SK-N-SH (cell line): ENCODE measurements at regions of chr6 and their contacts with region 1.

Region 1: GRCh38 chr6:33248925-33249731 is 22.5 kb downstream of the VPS52 start:
- DNase-seq: peak; percentile 88
- H3K4me3 ChIP-seq: peak overlapping the region; percentile 62 to 76
- H3K27ac ChIP-seq: peak overlapping the region; percentile 96
- H3K4me1 ChIP-seq: peaks cover 21 to 30% of the 10 kb centered on the region in 2 experiments
- H3K27me3 ChIP-seq: no peaks in the 10 kb centered on the region
- CTCF ChIP-seq: no peak
- EP300 ChIP-seq: no peak
- RAD21 ChIP-seq: no peak

Region 2: DNA sequence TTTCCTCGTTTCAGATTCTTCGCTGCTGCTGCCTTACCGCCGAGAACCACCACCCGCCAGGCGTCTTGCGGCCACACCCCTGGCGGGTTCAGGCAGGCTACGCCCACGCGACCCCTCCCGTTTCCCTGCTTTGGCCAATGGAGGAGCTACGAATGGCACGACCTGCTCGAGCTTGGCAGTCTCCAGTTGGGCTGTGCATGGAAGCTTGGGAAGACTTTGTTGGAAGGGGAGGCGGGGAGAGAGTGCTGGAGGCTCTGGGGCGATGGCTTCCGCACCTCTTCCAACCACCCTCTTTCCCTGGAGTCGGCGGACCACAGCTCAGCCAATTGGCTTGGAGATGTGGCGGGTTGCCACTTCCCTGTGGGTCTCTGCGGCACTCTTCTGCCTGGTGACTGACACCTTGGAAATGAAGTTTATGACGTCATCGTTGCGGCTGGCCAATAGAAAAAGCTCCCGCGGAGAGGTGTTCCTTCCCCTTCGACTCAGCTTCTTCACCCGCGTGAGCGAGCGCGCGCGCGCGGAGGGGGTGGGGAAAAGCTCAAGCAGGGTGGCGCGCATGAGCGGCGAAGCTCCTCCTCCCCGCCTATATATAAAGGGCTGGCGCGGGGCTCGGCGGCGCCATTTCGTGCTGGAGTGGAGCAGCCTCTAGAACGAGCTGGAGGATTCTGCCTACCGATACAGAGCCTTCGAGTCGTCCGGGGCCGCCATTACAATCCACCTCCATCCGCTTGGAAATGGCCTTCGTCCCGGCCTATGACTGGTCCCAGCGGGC is 277.4 kb before region 1 on chr6:
- CTCF ChIA-PET with region 1: interaction called, 3 read pairs
- POLR2A ChIA-PET with region 1: interaction called, 16 read pairs
- DNase-seq: peak; percentile 92
- H3K4me3 ChIP-seq: peak overlapping the region; percentile 83 to 88
- H3K27ac ChIP-seq: peak overlapping the region; percentile 97 to 99
- H3K4me1 ChIP-seq: peaks cover 21 to 28% of the 10 kb centered on the region in 2 experiments; a peak in 3 of 4 replicates
- H3K27me3 ChIP-seq: no peaks in the 10 kb centered on the region
- CTCF ChIP-seq: no peak
- EP300 ChIP-seq: peak; percentile 7 to 55; a peak in 2 of 4 replicates
- RAD21 ChIP-seq: no peak

Region 3: GRCh38 chr6:33088931-33089620 is 160.1 kb before region 1 on chr6:
- CTCF ChIA-PET with region 1: no interaction called
- POLR2A ChIA-PET with region 1: no interaction called
- DNase-seq: no peak
- H3K4me3 ChIP-seq: no peak overlapping the region
- H3K27ac ChIP-seq: no peak overlapping the region
- H3K4me1 ChIP-seq: no peaks in the 10 kb centered on the region
- H3K27me3 ChIP-seq: peaks cover 65% of the 10 kb centered on the region
- CTCF ChIP-seq: no peak
- EP300 ChIP-seq: no peak
- RAD21 ChIP-seq: no peak

Region 4: GRCh38 chr6:33126101-33126714 is 122.9 kb before region 1 on chr6:
- CTCF ChIA-PET with region 1: interaction called, 45 read pairs
- POLR2A ChIA-PET with region 1: interaction called, 3 read pairs
- DNase-seq: peak; percentile 51
- H3K4me3 ChIP-seq: no peak overlapping the region; a peak in 1 of 4 replicates
- H3K27ac ChIP-seq: no peak overlapping the region
- H3K4me1 ChIP-seq: no peaks in the 10 kb centered on the region
- H3K27me3 ChIP-seq: peaks cover 39% of the 10 kb centered on the region; the same call in 1 of the 2 replicates
- CTCF ChIP-seq: peak; percentile 56
- EP300 ChIP-seq: no peak
- RAD21 ChIP-seq: no peak

Region 5: GRCh38 chr6:33156561-33156960 is 92.6 kb before region 1 on chr6:
- CTCF ChIA-PET with region 1: interaction called, 96 read pairs
- POLR2A ChIA-PET with region 1: no interaction called
- DNase-seq: no peak
- H3K4me3 ChIP-seq: no peak overlapping the region
- H3K27ac ChIP-seq: no peak overlapping the region
- H3K4me1 ChIP-seq: peaks cover 0 to under 1% of the 10 kb centered on the region in 2 experiments; a peak in 1 of 4 replicates
- H3K27me3 ChIP-seq: no peaks in the 10 kb centered on the region; the same call in 1 of the 2 replicates
- CTCF ChIP-seq: no peak
- EP300 ChIP-seq: no peak
- RAD21 ChIP-seq: no peak

Region 6: DNA sequence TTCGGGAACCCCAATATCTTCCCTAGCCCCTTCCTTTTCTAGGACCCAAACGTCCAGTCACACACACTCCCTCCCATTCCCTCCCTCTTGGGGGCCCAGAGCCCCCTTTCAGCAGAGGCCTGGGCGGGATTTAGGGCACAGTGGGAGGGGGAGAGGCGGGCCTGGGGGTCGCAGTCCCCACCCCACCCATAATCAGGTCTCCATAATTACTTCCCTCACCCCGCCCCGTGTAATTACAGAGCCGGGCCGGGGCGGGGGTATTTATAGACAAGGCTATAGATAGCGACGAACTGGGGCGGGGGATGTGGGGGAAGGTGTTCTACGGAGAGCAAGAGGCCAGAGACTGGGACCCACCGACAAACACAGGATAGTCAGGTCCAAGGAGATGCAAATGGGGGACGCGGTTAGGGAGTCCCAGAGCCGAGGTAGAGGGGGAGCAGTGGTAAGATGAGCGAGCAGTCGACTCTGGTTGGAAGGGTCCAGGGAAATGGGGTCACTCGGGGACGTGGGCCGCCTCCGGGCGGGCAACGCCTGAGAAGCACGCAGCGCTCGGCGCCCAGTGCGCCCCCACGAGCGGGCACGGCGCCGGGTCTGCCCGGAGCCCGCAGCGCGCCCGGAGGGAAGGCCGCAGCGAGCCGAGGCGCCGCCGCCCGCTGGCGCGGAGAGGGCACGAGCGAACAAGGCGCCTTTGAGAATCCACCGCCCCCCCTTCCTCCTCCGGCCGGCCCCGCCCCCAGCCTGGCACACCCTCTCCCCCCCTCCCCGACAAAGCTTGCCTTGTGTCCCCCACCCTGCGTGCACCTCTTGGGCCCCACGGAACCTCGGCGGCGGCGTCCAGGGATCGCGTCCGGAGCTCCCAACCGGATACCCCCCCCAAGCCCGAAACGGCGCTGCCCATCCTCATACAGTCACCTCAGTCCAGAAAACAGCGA is 56.2 kb before region 1 on chr6:
- CTCF ChIA-PET with region 1: interaction called, 24 read pairs
- POLR2A ChIA-PET with region 1: interaction called, 3 read pairs
- DNase-seq: peak; percentile 75
- H3K4me3 ChIP-seq: no peak overlapping the region; a peak in 1 of 4 replicates
- H3K27ac ChIP-seq: no peak overlapping the region
- H3K4me1 ChIP-seq: peaks cover 0 to 22% of the 10 kb centered on the region in 2 experiments; a peak in 1 of 4 replicates
- H3K27me3 ChIP-seq: no peaks in the 10 kb centered on the region
- CTCF ChIP-seq: no peak
- EP300 ChIP-seq: no peak
- RAD21 ChIP-seq: no peak

Region 7: DNA sequence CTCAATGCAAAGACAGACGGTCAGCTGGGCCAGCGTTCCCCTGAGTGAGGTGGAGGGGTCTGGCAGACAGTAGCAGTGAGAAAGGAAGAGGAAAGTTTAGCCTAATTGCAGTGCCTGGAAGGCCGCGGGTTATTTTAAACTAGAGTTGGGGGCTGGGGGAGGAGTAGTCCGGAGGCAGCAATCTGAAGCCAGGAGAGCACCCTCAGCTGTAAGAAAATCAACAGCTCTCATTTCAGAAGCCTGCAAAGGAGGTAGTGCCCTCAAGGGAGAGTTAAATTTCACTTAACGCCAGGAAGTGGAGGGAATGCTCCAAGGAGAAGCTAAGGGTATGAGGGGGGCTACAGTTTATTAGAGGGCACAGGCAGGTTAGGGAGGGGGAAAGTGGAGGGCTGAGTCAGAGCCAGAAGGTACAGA is 13.9 kb before region 1 on chr6:
- CTCF ChIA-PET with region 1: interaction called, 68 read pairs
- POLR2A ChIA-PET with region 1: interaction called, 5 read pairs
- DNase-seq: no peak
- H3K4me3 ChIP-seq: no peak overlapping the region
- H3K27ac ChIP-seq: no peak overlapping the region
- H3K4me1 ChIP-seq: no peaks in the 10 kb centered on the region; a peak in 1 of 4 replicates
- H3K27me3 ChIP-seq: peaks cover 79% of the 10 kb centered on the region
- CTCF ChIP-seq: no peak
- EP300 ChIP-seq: no peak
- RAD21 ChIP-seq: no peak

Region 8: DNA sequence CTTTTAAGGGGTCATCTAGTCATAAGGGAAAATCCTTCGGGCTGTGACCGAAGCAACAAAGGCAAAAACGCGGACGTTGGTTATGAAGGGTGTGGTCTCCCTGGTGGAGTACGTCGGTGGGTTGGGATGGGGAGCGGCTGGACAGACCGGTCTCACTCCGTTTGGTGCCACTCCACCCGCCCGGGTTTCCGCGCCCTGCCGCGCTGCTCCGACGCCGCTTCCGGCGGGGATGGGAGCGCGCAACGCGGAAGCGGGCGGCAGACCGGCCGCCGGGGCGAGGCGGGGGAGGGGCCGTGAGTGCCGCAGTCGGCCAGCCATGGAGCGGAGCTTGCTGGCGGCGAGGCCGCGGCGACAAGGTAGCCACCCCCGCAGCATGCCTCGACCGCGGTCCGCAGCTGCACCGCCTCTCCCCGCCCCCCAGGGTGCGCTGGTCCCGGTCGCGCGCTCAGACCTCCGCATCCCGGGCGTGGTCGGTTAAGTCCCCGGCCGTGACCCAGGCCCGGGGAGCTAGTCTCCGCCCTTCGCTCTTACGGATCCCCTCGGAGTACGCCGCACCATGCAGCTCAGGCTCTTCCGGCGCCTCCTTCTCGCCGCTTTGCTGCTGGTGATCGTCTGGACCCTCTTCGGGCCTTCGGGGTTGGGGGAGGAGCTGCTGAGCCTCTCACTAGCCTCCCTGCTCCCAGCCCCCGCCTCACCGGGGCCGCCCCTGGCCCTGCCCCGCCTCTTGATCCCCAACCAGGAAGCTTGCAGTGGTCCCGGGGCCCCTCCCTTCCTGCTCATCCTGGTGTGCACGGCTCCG is 27.9 kb after region 1 on chr6 and contains the start of gene B3GALT4:
- CTCF ChIA-PET with region 1: interaction called, 18 read pairs
- POLR2A ChIA-PET with region 1: interaction called, 14 read pairs
- DNase-seq: peak; percentile 92
- H3K4me3 ChIP-seq: peak within 1 kb of the TSS; percentile 49 to 76
- H3K27ac ChIP-seq: peak within 1 kb of the TSS; percentile 67 to 86
- H3K4me1 ChIP-seq: peaks cover 31 to 36% of the 10 kb centered on the region in 2 experiments; a peak in 3 of 4 replicates
- H3K27me3 ChIP-seq: no peaks in the 10 kb centered on the region
- CTCF ChIP-seq: peak; percentile 51
- EP300 ChIP-seq: no peak
- RAD21 ChIP-seq: no peak
- polyA plus RNA-seq, gene B3GALT4: 0.55 and 0.56 TPM in 2 replicates